ENCODE measurements at regions of chr5 and their contacts with region 1.

Region 1: DNA sequence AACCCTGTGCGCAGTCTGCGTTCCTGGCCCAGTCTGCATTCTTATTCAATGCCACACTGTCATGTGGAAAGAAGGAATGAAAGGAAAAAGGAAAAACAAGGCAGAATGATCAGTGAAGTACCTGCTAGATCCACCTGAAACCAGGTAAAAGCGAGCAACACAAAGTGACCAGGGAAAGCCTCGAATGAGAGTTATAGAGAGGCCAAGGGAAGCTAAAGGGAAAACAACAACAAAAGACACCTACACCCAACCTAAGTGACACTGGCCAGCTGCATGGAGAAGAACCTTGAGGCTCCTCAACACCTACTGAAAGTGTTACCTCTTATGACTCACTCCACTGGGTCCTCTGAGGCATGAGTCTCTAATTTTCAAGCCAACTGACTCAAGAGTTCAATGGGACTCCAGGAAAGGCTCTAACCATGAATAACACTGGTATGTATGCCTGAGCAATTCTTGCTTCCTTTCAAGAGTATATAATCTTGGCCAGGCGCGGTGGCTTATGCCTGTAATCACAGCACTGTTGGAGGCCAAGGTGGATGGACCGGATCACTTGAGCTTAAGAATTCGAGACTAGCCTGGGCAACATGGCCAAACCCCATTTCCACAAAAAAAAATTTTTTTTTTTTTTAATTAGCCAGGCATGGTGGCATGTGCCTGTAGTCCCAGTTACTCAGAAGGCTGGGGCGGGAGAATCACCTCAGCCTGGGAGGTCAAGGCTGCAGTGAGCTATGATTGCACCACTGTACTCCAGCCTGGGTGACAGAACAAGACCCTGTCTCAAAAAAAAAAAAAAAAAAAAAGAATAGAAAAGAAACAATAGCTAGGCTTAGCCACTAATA is 29.0 kb downstream of the MTMR12 start:
- DNase-seq: no peak
- ATAC-seq: peak; percentile 52
- H3K4me3 ChIP-seq: no peak overlapping the region
- H3K27ac ChIP-seq: no peak overlapping the region
- H3K4me1 ChIP-seq: peaks cover 28% of the 10 kb centered on the region
- H3K27me3 ChIP-seq: no peaks in the 10 kb centered on the region
- CTCF ChIP-seq: no peak
- EP300 ChIP-seq: no peak
- POLR2A ChIP-seq: no peak
- RAD21 ChIP-seq: no peak

Region 2: DNA sequence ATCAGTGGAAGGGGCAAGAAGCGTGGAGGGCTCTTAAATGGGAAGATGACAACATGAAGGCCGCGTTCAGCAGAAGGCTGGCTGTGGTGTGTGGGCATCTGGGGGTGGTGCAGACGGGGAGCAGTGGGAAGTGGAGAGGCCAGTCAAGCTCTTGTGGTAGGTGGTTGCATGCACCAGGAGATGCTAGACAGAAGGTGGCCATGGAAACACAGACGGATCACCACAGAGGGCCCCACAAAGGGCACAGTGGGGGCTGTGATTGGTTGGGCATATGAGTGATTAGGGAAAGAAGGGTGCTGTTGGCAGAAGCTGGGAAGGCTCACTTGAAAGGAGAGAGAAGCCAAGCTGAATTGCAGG is 14.3 kb after region 1 on chr5:
- CTCF ChIA-PET with region 1: interaction called, 3 read pairs
- POLR2A ChIA-PET with region 1: interaction called, 3 read pairs
- RAD21 ChIA-PET with region 1: interaction called, 4 read pairs
- SMC1A ChIA-PET with region 1: interaction called, 30 read pairs
- in situ Hi-C with region 1: no loop called
- intact Hi-C with region 1: no loop called
- DNase-seq: no peak
- ATAC-seq: peak; percentile 91
- H3K4me3 ChIP-seq: no peak overlapping the region
- H3K27ac ChIP-seq: no peak overlapping the region
- H3K4me1 ChIP-seq: peaks cover 15% of the 10 kb centered on the region
- H3K27me3 ChIP-seq: no peaks in the 10 kb centered on the region
- CTCF ChIP-seq: no peak
- EP300 ChIP-seq: no peak
- POLR2A ChIP-seq: no peak
- RAD21 ChIP-seq: no peak

Region 3: DNA sequence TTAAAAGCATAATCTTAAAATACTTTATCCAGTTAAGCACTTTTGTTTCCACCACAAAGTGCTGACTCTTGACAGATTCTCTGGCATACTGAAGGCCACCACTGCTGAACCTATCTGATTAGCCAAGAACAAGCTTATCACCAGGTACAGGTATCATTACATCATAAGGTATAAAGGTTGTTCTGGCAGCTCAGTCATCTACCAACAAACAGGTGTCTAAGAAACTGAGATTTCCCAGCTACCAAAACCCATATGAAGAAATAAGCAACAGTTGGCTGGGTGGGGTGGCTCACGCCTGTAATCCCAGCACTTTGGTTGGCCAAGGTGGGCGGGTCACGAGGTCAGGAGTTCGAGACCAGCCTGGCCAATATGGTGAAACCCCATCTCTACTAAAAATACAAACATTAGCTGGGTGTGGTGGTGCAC is 24.0 kb after region 1 on chr5:
- CTCF ChIA-PET with region 1: interaction called, 5 read pairs
- POLR2A ChIA-PET with region 1: interaction called, 16 read pairs
- RAD21 ChIA-PET with region 1: interaction called, 4 read pairs
- SMC1A ChIA-PET with region 1: interaction called, 10 read pairs
- in situ Hi-C with region 1: no loop called
- intact Hi-C with region 1: loop called (anchors 1 kb)
- DNase-seq: no peak
- ATAC-seq: no peak
- H3K4me3 ChIP-seq: no peak overlapping the region
- H3K27ac ChIP-seq: no peak overlapping the region
- H3K4me1 ChIP-seq: peaks cover 13% of the 10 kb centered on the region
- H3K27me3 ChIP-seq: no peaks in the 10 kb centered on the region
- CTCF ChIP-seq: no peak
- EP300 ChIP-seq: no peak
- POLR2A ChIP-seq: no peak
- RAD21 ChIP-seq: no peak

Region 4: GRCh38 chr5:32312647-32313523 is 29.1 kb after region 1 on chr5 and contains the start of gene MTMR12:
- CTCF ChIA-PET with region 1: interaction called, 5 read pairs
- POLR2A ChIA-PET with region 1: interaction called, 16 read pairs
- RAD21 ChIA-PET with region 1: interaction called, 4 read pairs
- SMC1A ChIA-PET with region 1: interaction called, 10 read pairs
- in situ Hi-C with region 1: no loop called
- intact Hi-C with region 1: loop called (anchors 1 kb)
- DNase-seq: peak; percentile 98
- ATAC-seq: peak; percentile 95
- H3K4me3 ChIP-seq: peak within 1 kb of the TSS; percentile 73
- H3K27ac ChIP-seq: peak within 1 kb of the TSS; percentile 83
- H3K4me1 ChIP-seq: peaks cover 13% of the 10 kb centered on the region
- H3K27me3 ChIP-seq: no peaks in the 10 kb centered on the region
- CTCF ChIP-seq: no peak
- EP300 ChIP-seq: peak in 1 of 2 experiments; percentile 35; a peak in 1 of 4 replicates
- POLR2A ChIP-seq: peak; percentile 89
- RAD21 ChIP-seq: no peak
- polyA plus RNA-seq, gene MTMR12: 5.0 to 8.1 TPM

Region 5: DNA sequence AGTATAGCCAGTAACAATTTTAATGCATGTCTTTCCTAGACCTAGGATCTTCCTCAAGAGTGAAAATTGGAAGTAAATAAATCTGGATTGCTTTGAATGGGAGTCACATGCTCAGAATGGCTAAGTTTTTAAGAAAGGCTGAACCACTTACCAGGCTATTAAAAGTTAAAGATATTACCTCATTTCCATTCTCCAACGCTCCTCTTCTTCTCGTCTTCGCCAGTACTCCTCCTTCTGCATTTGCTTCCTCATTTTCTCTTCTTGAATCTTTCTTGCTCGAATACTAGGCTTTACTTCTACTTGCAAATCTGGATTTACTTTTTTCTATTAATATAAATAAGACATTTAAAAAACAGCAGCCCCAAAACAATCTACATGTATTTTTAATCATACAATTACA is 111.2 kb after region 1 on chr5:
- CTCF ChIA-PET with region 1: no interaction called
- POLR2A ChIA-PET with region 1: no interaction called
- RAD21 ChIA-PET with region 1: no interaction called
- SMC1A ChIA-PET with region 1: no interaction called
- in situ Hi-C with region 1: no loop called
- intact Hi-C with region 1: no loop called
- DNase-seq: no peak
- ATAC-seq: no peak
- H3K4me3 ChIP-seq: no peak overlapping the region
- H3K27ac ChIP-seq: no peak overlapping the region
- H3K4me1 ChIP-seq: no peaks in the 10 kb centered on the region
- H3K27me3 ChIP-seq: no peaks in the 10 kb centered on the region
- CTCF ChIP-seq: no peak
- EP300 ChIP-seq: no peak
- POLR2A ChIP-seq: no peak
- RAD21 ChIP-seq: no peak